ENCODE measurements at regions of chr5 and their contacts with region 1.

Region 1: GRCh38 chr5:81247441-81247972 is 14.4 kb downstream of the CKMT2 start:
- DNase-seq: no peak
- H3K4me3 Mint-ChIP-seq: no peak overlapping the region
- H3K27ac Mint-ChIP-seq: no peak overlapping the region
- H3K4me1 Mint-ChIP-seq: no peaks in the 10 kb centered on the region
- H3K27me3 Mint-ChIP-seq: no peaks in the 10 kb centered on the region

Region 2: DNA sequence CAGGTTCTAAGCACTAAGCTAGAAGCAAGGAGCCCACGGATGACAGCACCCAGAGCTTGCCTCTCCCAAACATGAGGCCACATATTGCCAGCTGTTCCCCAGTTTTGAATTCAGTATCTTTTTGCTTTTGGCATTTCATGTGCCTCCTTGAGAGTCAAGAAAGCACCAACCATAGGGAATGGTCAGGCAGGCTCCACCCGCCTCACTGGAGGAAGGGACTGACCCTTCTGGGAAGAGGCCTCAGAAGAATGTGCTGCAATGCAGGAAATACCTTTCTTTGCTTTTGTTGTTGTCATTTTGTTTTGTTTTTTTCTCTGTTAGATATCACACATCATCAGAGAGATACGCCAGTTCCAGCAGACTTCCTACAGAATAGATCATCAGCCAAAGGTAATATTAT is 28.1 kb before region 1 on chr5:
- intact Hi-C with region 1: no loop called
- DNase-seq: no peak
- H3K4me3 Mint-ChIP-seq: no peak overlapping the region
- H3K27ac Mint-ChIP-seq: no peak overlapping the region
- H3K4me1 Mint-ChIP-seq: peaks cover 4% of the 10 kb centered on the region
- H3K27me3 Mint-ChIP-seq: peaks cover 1% of the 10 kb centered on the region

Region 3: DNA sequence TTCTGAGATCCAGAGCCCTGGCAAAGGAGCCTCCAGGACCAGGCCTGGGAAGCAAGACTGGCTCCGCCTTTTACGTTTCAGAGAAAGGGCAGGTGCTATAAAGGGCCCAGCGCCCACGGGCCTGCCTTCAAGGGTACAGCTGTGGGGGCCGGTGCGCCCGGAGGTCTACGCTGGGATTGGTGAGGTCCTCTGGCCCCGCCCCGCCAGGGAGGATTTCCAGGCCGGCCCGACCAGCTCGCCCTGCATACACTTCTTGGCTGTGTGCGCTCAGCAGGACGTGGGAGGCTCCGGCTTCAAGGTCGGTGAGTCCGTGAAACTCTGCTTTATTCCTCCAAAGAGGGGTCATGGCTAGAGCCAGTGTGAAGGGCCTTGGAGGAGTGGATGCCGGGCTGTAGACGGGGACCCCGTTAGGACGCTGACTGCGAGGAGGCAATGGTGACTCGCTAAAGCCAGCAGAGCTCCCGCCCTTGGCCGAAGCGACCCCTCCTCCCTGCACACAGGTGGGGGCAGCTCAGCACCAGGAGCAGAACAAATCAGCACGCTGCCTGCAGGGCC is 14.3 kb before region 1 on chr5 and contains the start of gene CKMT2:
- intact Hi-C with region 1: no loop called
- DNase-seq: no peak
- H3K4me3 Mint-ChIP-seq: no peak within 1 kb of the TSS
- H3K27ac Mint-ChIP-seq: no peak within 1 kb of the TSS
- H3K4me1 Mint-ChIP-seq: peaks cover 27% of the 10 kb centered on the region
- H3K27me3 Mint-ChIP-seq: no peaks in the 10 kb centered on the region
- total RNA-seq, gene CKMT2: not detected in 2 replicates

Region 4: DNA sequence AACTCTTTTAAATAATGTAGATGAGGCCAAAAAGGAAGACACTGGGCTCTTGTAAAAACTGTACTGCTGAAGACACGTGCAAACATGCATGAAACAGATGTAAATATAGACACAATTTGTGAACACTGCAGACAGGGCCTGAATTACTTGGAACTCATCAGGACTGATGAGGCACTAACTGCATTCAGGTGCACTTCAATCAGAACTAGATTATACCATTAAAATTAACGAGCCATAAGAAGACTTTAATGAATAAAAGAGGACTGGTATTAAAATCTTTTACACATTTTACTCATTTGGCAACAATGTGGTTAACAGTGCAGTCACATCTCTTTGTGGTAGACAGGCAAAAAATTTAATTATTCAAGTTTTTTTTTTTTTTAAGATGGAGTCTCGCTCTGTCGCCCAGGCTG is 40.5 kb after region 1 on chr5:
- intact Hi-C with region 1: loop called (anchors 10 kb)
- DNase-seq: no peak
- H3K4me3 Mint-ChIP-seq: no peak overlapping the region
- H3K27ac Mint-ChIP-seq: no peak overlapping the region
- H3K4me1 Mint-ChIP-seq: peaks cover 36% of the 10 kb centered on the region
- H3K27me3 Mint-ChIP-seq: no peaks in the 10 kb centered on the region

Region 5: GRCh38 chr5:81675846-81676245 is 428.3 kb after region 1 on chr5:
- intact Hi-C with region 1: no loop called
- DNase-seq: no peak
- H3K4me3 Mint-ChIP-seq: no peak overlapping the region
- H3K27ac Mint-ChIP-seq: no peak overlapping the region
- H3K4me1 Mint-ChIP-seq: no peaks in the 10 kb centered on the region
- H3K27me3 Mint-ChIP-seq: peaks cover 2% of the 10 kb centered on the region

Measured in activated T-helper 1 cell treated with anti-CD3 and anti-CD28 coated beads, Interleukin-12 subunit alpha, Interleukin-12 subunit beta, Interleukin-2, Interleukin-4 antibody, amounts not matched to agents 30 ng/mL and 10 ng/mL and 1 ng/mL, durations not matched to agents 14 hours and 24 hours and 36 hours (primary cell).